Activated naive CD4-positive, alpha-beta T cell treated with anti-CD3 and anti-CD28 coated beads, Interleukin-2, amount 10 ng/mL, durations not matched to agents 7 days and 5 days (primary cell): ENCODE measurements at regions of chr12 and their contacts with region 1.

Region 1: GRCh38 chr12:64890873-64891468 is 66.5 kb downstream of the TBC1D30 start:
- DNase-seq: no peak
- H3K4me3 Mint-ChIP-seq: no peak overlapping the region
- H3K27ac Mint-ChIP-seq: no peak overlapping the region
- H3K4me1 Mint-ChIP-seq: no peaks in the 10 kb centered on the region
- H3K27me3 Mint-ChIP-seq: peaks cover 12% of the 10 kb centered on the region

Region 2: DNA sequence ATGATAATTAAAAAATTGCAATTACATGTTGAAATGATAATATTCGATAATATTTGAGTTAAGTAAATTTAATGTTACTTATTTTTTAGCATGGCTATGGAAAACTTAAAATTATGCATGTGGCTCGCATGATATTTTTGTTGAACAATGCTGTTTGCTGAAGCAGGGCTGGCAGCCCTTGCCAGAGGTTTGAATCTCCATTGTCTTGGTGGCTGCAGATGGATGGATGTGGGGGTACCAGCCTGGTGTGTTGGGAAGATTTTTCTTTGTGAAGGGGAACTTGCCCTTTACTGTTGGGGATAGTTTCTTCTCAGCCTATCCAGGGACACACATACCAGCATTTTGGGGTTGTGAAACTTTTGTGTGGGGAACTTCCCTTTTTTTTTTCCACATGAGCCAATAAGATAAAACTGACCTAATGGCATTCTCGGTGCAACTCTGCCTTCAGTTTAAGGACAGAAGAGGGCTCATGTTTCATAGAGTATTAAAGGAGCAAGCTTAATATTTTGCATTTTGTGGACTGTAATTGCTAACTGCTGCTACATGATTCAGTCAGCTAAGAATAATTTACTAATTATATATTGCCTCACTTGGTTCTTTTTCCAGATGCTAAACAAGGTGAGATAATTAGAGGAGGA is 271.9 kb before region 1 on chr12:
- CTCF ChIA-PET with region 1: no interaction called
- DNase-seq: no peak
- H3K4me3 Mint-ChIP-seq: no peak overlapping the region
- H3K27ac Mint-ChIP-seq: no peak overlapping the region
- H3K4me1 Mint-ChIP-seq: peaks cover 59% of the 10 kb centered on the region
- H3K27me3 Mint-ChIP-seq: no peaks in the 10 kb centered on the region

Region 3: GRCh38 chr12:64808110-64808509 is 82.9 kb before region 1 on chr12:
- CTCF ChIA-PET with region 1: no interaction called
- DNase-seq: no peak
- H3K4me3 Mint-ChIP-seq: no peak overlapping the region
- H3K27ac Mint-ChIP-seq: no peak overlapping the region
- H3K4me1 Mint-ChIP-seq: no peaks in the 10 kb centered on the region
- H3K27me3 Mint-ChIP-seq: peaks cover 17% of the 10 kb centered on the region

Region 4: DNA sequence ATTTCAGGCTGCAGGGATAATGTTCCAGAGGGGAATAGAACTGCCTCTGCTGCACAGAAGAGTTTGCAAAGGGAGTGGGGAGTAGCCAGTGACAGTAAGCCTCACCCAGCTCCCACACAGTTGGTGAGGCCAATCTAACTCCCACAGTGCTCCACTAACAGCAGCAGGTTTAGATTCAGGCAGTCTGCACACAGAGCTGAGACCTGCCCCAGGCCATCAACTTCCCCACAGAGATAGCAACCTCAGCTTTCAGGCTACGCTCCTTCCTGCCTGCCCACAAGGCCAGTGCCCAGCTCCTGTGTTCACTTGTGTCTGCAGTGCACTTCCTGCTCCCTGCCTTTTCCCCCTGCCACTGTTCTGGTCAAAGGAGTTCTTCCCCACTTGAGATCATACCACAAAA is 41.0 kb after region 1 on chr12:
- CTCF ChIA-PET with region 1: no interaction called
- DNase-seq: no peak
- H3K4me3 Mint-ChIP-seq: no peak overlapping the region
- H3K27ac Mint-ChIP-seq: no peak overlapping the region
- H3K4me1 Mint-ChIP-seq: no peaks in the 10 kb centered on the region
- H3K27me3 Mint-ChIP-seq: peaks cover 15% of the 10 kb centered on the region

Region 5: DNA sequence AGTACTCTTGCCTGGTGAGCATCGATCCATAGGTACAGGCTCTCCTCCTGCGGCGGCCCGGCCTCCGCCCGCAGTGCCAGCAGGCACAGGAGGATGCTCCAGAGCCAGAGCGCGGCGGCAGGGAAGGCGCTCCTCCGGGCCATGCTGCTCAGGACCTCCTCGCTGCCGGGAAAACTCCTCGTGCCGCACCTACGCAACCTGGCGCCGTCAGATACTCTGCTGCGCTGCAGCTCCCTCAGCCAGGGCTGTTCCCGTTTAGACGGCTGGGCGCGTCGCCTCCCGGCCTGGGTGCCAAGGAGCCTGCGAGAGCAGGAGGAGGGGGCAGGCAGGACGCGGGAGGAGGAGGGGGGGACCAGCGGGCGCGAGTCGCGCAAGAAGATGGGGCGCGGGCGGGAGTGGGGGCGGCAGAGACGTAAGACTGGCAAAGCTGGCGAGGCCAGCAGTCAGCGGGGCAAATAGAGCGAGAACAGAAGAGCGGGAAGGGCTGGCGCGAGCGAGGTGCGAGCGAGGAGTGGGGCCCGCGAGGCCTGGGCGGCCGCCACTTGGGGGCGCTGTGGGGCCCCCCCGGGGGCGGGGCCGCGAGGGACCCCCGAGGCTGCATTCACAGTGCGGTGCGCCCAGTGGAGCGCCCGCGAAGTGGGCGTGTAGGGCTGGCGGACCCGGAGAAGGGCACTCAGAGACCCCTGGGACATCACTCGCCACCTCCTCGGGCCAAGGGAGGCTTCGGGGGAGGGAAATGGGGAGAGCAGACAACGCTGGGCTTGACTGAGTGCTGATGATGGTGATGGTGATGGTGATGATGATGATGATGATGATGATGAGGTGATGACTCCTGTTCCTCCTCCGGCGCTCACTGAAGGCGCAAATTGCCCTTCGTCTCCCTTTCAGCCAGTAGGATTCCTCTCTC is 230.3 kb after region 1 on chr12 and contains the start of gene WIF1:
- CTCF ChIA-PET with region 1: interaction called, 17 read pairs
- DNase-seq: peak; percentile 38
- H3K4me3 Mint-ChIP-seq: peak within 1 kb of the TSS; percentile 57
- H3K27ac Mint-ChIP-seq: no peak within 1 kb of the TSS
- H3K4me1 Mint-ChIP-seq: peaks cover 11% of the 10 kb centered on the region
- H3K27me3 Mint-ChIP-seq: peaks cover 42% of the 10 kb centered on the region